Endothelial cell of umbilical vein (primary cell): ENCODE measurements at regions of chrX and their contacts with region 1.

Region 1: GRCh38 chrX:136880452-136881013 is at the start of gene RBMX:
- DNase-seq: peak; percentile 93
- H3K4me3 ChIP-seq: peak within 1 kb of the TSS; percentile 91 to 100 (median 99)
- H3K27ac ChIP-seq: peak within 1 kb of the TSS; percentile 94
- H3K4me1 ChIP-seq: peaks cover 6% of the 10 kb centered on the region
- H3K27me3 ChIP-seq: no peaks in the 10 kb centered on the region
- CTCF ChIP-seq: no peak
- POLR2A ChIP-seq: peak; percentile 98
- total RNA-seq, gene RBMX: 235 and 251 TPM in 2 replicates

Region 2: DNA sequence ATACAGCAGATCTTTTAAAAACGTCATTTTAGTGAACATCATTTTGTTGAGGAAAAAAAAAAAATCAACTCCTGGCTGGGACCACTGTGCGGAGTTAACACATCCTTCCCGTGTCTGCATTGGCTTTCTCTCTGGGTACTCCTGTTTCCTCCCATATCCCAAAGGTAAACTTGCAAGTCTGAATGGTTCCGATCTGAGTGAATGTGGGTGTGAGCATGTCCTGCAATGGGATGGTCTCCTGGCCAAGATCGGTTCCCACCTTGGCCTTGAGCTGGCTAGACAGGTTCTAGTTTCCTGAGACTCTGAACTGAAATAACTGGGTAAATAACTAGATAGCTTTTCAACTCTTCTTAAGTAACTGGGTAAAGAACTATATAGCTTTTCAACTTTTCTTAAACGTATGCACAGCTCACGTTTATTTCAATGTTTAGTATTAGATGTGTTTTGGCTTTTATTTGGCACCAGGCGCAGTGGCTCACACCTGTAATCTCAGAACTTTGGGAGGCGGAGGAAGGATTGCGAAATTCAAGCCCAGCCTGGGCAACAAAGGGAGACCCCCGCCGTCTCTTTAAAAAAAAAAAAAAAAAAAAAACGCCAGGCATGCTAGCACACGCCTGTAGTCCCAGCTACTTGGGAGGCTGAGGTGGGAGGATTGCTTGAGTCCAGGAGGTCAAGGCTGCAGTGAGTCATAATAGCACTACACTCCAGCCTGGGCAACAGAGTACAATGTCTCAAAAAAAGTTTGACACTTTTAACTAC is 14.0 kb before region 1 on chrX:
- CTCF ChIA-PET with region 1: interaction called, 4 read pairs
- POLR2A ChIA-PET with region 1: interaction called, 18 read pairs
- dilution Hi-C with region 1: no loop called
- intact Hi-C with region 1: no loop called
- DNase-seq: no peak
- H3K4me3 ChIP-seq: no peak overlapping the region
- H3K27ac ChIP-seq: no peak overlapping the region
- H3K4me1 ChIP-seq: no peaks in the 10 kb centered on the region
- H3K27me3 ChIP-seq: no peaks in the 10 kb centered on the region
- CTCF ChIP-seq: no peak
- POLR2A ChIP-seq: no peak

Region 3: GRCh38 chrX:136909706-136910564 is 29.4 kb after region 1 on chrX:
- CTCF ChIA-PET with region 1: interaction called, 4 read pairs
- POLR2A ChIA-PET with region 1: interaction called, 9 read pairs
- dilution Hi-C with region 1: no loop called
- intact Hi-C with region 1: loop called (anchors 1 kb)
- DNase-seq: peak; percentile 82
- H3K4me3 ChIP-seq: peak overlapping the region; percentile 46 to 86 (median 78)
- H3K27ac ChIP-seq: peak overlapping the region; percentile 32
- H3K4me1 ChIP-seq: peaks cover 6% of the 10 kb centered on the region
- H3K27me3 ChIP-seq: no peaks in the 10 kb centered on the region
- CTCF ChIP-seq: no peak
- POLR2A ChIP-seq: peak; percentile 57

Region 4: GRCh38 chrX:136920001-136920400 is 39.5 kb after region 1 on chrX:
- CTCF ChIA-PET with region 1: interaction called, 7 read pairs
- POLR2A ChIA-PET with region 1: interaction called, 10 read pairs
- dilution Hi-C with region 1: no loop called
- intact Hi-C with region 1: loop called (anchors 1 kb)
- DNase-seq: peak; percentile 50
- H3K4me3 ChIP-seq: no peak overlapping the region
- H3K27ac ChIP-seq: no peak overlapping the region
- H3K4me1 ChIP-seq: no peaks in the 10 kb centered on the region
- H3K27me3 ChIP-seq: no peaks in the 10 kb centered on the region
- CTCF ChIP-seq: no peak
- POLR2A ChIP-seq: no peak